K562 (cell line): ENCODE measurements at regions of chr6 and their contacts with region 1.

Region 1: GRCh38 chr6:37018198-37019064 is 13.0 kb downstream of the FGD2 start:
- DNase-seq: peak; percentile 88 to 93 (median 90)
- ATAC-seq: peak; percentile 97
- H3K4me3 ChIP-seq: no peak overlapping the region
- H3K27ac ChIP-seq: peak overlapping the region; percentile 25; the same call in 1 of the 3 replicates
- H3K4me1 ChIP-seq: peaks cover 13 to 26% of the 10 kb centered on the region in 2 experiments
- H3K27me3 ChIP-seq: no peaks in the 10 kb centered on the region; a peak in 1 of 5 replicates
- CTCF ChIP-seq: peak; percentile 99 to 100 (median 99)
- EP300 ChIP-seq: no peak
- POLR2A ChIP-seq: no peak
- RAD21 ChIP-seq: peak; percentile 92 to 98

Region 2: DNA sequence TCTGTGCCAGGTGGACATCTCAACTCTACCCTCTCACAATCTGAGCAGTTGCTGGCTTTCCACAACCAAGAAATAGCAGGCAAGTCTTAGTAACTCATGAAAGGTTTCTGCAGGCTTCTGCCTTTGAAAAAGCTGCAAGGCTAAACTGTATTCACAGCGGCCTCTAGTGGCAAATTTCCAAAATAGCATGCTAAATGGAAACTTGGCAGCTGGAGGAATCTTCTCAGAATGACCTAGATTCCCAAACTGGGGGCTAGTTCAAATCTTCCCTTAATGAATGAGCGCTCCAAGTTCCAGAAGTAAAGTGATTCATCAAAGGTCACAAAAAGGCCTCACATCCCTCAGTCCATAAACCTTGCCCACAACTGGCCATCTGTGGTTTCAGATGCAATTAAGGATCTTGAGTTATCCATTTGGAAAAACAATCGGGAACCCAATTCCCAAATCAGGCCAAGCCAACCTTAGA is 167.2 kb before region 1 on chr6:
- CTCF ChIA-PET with region 1: interaction called, 5 read pairs
- POLR2A ChIA-PET with region 1: no interaction called
- in situ Hi-C with region 1: no loop called
- intact Hi-C with region 1: loop called (anchors 1 kb)
- DNase-seq: peak; percentile 62 to 84 (median 66)
- ATAC-seq: peak; percentile 39
- H3K4me3 ChIP-seq: no peak overlapping the region
- H3K27ac ChIP-seq: no peak overlapping the region
- H3K4me1 ChIP-seq: peaks cover 22 to 35% of the 10 kb centered on the region in 2 experiments
- H3K27me3 ChIP-seq: no peaks in the 10 kb centered on the region
- CTCF ChIP-seq: peak; percentile 86 to 98 (median 91)
- EP300 ChIP-seq: no peak
- POLR2A ChIP-seq: no peak
- RAD21 ChIP-seq: peak; percentile 95

Region 3: DNA sequence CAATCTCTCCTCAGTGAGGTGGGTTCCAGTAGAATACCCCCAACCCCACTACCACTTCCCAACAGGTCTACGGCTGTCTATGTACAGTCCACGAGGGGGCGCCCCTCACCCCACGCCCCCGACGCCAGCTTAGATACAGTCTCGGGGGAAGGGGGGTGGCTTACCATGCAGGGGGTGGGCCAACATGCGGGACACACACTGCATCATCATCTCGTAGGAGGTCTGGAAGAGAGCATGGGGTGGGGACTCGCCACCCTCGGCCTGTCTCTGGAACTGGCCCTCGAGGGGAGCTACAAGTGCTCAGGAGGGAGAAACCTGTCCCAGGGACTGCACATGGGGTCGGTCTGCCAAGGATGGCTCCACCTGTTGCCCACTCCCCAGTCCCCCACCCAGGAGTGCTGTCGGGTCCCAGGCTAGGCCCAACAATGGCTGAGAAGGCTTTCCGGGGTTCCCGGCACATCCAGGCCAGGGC is 40.9 kb before region 1 on chr6:
- CTCF ChIA-PET with region 1: interaction called, 4 read pairs
- POLR2A ChIA-PET with region 1: no interaction called
- in situ Hi-C with region 1: no loop called
- intact Hi-C with region 1: loop called (anchors 1 kb)
- DNase-seq: peak; percentile 67 to 83 (median 80)
- ATAC-seq: peak; percentile 83
- H3K4me3 ChIP-seq: no peak overlapping the region
- H3K27ac ChIP-seq: no peak overlapping the region
- H3K4me1 ChIP-seq: peaks cover 2 to 9% of the 10 kb centered on the region in 2 experiments; a peak in 4 of 5 replicates
- H3K27me3 ChIP-seq: no peaks in the 10 kb centered on the region
- CTCF ChIP-seq: peak; percentile 65 to 82 (median 76)
- EP300 ChIP-seq: no peak
- POLR2A ChIP-seq: no peak
- RAD21 ChIP-seq: peak in 1 of 2 experiments; percentile 34; a peak in 3 of 4 replicates

Region 4: GRCh38 chr6:37131104-37131959 is 112.9 kb after region 1 on chr6:
- CTCF ChIA-PET with region 1: no interaction called
- POLR2A ChIA-PET with region 1: no interaction called
- in situ Hi-C with region 1: no loop called
- intact Hi-C with region 1: no loop called
- DNase-seq: no peak
- ATAC-seq: peak; percentile 9; the same call in 2 of the 3 replicates
- H3K4me3 ChIP-seq: no peak overlapping the region
- H3K27ac ChIP-seq: peak overlapping the region; percentile 3; the same call in 1 of the 3 replicates
- H3K4me1 ChIP-seq: peaks cover 39% of the 10 kb centered on the region in 2 experiments
- H3K27me3 ChIP-seq: no peaks in the 10 kb centered on the region
- CTCF ChIP-seq: no peak
- EP300 ChIP-seq: no peak
- POLR2A ChIP-seq: no peak
- RAD21 ChIP-seq: no peak

Region 5: GRCh38 chr6:37207903-37208456 is 189.5 kb after region 1 on chr6:
- CTCF ChIA-PET with region 1: interaction called, 204 read pairs
- POLR2A ChIA-PET with region 1: interaction called, 8 read pairs
- in situ Hi-C with region 1: loop called (anchors 5 kb)
- intact Hi-C with region 1: loop called (anchors 1 kb)
- DNase-seq: peak; percentile 88 to 97 (median 90)
- ATAC-seq: peak; percentile 83
- H3K4me3 ChIP-seq: no peak overlapping the region
- H3K27ac ChIP-seq: peak overlapping the region; percentile 7; the same call in 2 of the 3 replicates
- H3K4me1 ChIP-seq: peaks cover 60 to 72% of the 10 kb centered on the region in 2 experiments
- H3K27me3 ChIP-seq: no peaks in the 10 kb centered on the region
- CTCF ChIP-seq: peak; percentile 94 to 98 (median 94)
- EP300 ChIP-seq: peak; percentile 34; the same call in 1 of the 2 replicates
- POLR2A ChIP-seq: no peak
- RAD21 ChIP-seq: peak; percentile 95 to 98

Region 6: DNA sequence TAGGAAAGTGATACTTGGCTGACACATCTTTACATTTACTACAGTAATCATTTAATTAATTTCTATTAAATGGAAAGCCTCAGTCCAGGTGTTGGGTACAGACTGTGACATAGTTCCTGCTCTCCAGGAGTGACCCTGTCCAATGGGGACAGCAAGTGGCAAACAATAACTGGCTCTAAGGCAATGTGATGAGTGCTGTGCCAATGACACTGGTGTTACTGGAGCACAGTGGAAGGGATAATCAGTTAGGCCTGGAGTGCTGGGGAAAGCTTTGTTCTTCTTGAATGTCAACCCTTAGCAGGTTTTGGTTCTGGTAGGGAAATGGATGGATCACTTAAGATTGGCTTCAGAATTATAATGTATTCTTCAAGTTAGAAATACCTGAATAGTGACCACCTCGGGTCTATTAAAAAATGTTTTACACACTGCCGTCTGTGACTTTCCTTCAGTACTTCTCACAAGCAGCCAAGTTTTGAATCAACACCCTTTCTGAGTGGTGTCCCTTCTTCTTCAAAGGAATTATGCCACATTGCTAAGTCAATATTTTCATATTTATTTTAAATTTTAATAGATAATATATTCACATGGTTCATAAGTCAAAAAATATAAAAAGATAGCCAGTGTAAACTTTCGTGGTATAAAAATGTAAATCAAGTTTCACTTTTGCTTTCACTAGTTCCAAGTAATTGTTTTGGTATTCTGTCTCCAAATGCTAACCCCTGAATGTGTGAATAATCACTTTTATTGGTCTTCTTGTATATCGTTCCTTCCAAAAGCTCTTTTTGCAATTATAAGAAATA is 424.2 kb after region 1 on chr6:
- CTCF ChIA-PET with region 1: no interaction called
- POLR2A ChIA-PET with region 1: no interaction called
- in situ Hi-C with region 1: no loop called
- intact Hi-C with region 1: no loop called
- DNase-seq: no peak
- ATAC-seq: no peak
- H3K4me3 ChIP-seq: no peak overlapping the region
- H3K27ac ChIP-seq: no peak overlapping the region
- H3K4me1 ChIP-seq: no peaks in the 10 kb centered on the region
- H3K27me3 ChIP-seq: no peaks in the 10 kb centered on the region
- CTCF ChIP-seq: no peak
- EP300 ChIP-seq: no peak
- POLR2A ChIP-seq: no peak
- RAD21 ChIP-seq: no peak

Region 7: DNA sequence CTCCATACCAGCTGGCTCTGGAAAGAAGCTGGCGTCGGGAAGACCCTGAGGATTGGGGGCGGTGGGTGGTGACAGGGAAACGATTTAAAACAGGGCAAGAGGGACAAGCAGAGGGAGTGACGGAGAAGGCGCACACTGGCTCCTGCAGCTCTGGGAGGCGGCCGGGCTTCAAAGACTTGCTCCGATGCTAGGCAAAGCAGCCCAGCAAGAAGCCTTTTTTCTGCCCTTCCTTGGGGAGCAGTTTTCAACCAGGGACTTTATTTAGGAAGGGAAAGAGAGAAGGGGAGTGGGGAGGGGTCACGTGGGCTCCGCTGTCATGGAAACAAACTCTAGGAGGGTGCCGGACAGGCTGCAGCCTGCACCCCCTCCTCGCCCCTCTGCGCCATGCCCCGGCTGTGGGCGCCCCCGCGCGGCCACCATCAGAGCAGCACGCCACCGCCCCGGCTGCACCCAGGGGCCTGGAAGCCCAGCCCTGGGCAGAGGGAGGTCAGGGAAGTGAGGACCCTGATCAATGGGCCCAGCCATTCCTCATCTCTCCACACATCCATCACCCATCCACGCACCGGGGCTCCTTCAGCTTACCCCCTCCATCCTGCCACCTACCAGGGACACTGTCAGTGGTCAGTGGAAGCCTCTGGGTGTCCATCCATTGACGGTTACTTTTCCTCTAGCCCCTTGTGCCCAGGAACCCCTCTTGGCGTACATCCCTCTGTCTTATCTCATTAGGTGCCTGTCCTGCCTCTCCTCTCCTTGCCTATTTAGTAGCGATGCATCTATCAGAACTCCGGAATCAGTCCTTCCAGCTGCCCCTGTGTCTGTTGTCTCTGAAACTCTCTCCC is 547.9 kb after region 1 on chr6:
- CTCF ChIA-PET with region 1: interaction called, 23 read pairs
- POLR2A ChIA-PET with region 1: no interaction called
- in situ Hi-C with region 1: no loop called
- intact Hi-C with region 1: no loop called
- DNase-seq: peak; percentile 70 to 89 (median 87)
- ATAC-seq: peak; percentile 95
- H3K4me3 ChIP-seq: no peak overlapping the region
- H3K27ac ChIP-seq: no peak overlapping the region
- H3K4me1 ChIP-seq: peaks cover 0 to 15% of the 10 kb centered on the region in 2 experiments; a peak in 2 of 5 replicates
- H3K27me3 ChIP-seq: peaks cover 42 to 87% of the 10 kb centered on the region in 2 experiments
- CTCF ChIP-seq: peak; percentile 90 to 94 (median 93)
- EP300 ChIP-seq: no peak
- POLR2A ChIP-seq: no peak
- RAD21 ChIP-seq: peak; percentile 80 to 94